ENCODE measurements at regions of chr6 and their contacts with region 1.

Region 1: DNA sequence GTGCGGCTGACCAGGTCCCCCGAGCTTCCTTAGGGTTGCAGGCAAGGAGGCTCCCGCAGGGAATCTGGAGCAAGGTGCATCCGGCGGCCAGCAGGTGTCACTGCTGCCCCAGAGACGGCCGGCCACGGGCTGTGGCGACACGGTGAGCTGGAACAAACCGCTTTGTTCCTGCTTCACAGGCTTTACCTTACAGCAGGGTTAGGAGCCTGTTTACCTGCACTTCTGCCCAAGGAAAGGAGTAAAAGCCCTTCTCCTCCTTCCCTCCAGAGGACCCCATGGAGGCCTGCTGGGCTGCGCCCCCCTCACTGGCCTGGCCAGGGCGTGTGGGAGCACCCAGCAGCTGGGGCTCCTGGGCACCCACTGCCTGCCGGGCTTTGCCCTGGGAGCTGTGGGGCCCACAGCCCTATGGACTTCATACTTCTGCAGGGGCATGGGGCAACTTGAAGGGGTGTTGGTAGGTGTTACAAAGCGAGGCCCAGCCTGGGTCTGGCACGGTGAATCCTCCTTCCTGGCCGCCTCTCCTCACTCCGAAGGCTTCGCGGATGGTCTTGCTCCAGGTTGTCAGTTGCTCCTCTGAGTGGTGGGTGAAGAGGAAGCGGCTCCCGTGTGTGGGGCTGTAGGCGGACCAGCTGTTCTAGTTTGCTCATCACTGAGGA is 88.4 kb downstream of the CDC5L start:
- DNase-seq: peak; percentile 54 to 75 (median 74)
- H3K4me3 ChIP-seq: peak overlapping the region in 2 of 7 experiments; percentile 7 to 41
- H3K27ac ChIP-seq: no peak overlapping the region
- H3K4me1 ChIP-seq: peaks cover 0 to 27% (median 20%) of the 10 kb centered on the region in 4 experiments
- H3K27me3 ChIP-seq: no peaks in the 10 kb centered on the region

Region 2: DNA sequence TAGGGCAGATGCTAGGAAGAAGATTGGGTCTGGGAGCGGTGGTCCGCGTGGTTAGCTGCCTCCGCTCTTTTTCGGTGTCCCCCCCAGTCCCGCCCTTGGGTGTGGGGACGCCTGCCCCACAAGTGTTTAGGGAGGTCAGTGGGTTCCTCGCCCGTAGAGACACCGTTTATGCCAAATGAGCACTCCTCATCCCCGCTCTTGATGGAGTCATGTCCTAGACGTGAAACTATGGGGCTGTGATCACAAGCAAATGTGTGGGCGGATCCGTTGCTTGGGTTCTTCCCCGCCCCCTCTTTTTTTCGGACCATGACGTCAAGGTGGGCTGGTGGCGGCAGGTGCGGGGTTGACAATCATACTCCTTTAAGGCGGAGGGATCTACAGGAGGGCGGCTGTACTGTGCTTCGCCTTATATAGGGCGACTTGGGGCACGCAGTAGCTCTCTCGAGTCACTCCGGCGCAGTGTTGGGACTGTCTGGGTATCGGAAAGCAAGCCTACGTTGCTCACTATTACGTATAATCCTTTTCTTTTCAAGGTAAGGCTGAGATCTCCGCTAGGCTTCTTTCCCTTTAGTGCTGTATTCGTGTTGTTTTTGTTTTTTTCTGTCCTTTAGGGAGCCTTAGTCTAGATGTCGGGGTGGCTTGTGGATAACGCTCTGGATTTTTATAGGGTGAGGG is 229.1 kb before region 1 on chr6 and contains the start of gene HSP90AB1:
- CTCF ChIA-PET with region 1: no interaction called
- POLR2A ChIA-PET with region 1: no interaction called
- DNase-seq: peak; percentile 98 to 99 (median 99)
- H3K4me3 ChIP-seq: peak within 1 kb of the TSS; percentile 67 to 100 (median 97)
- H3K27ac ChIP-seq: peak within 1 kb of the TSS; percentile 88 to 96
- H3K4me1 ChIP-seq: peaks cover 13 to 39% (median 31%) of the 10 kb centered on the region in 4 experiments
- H3K27me3 ChIP-seq: no peaks in the 10 kb centered on the region

Region 3: DNA sequence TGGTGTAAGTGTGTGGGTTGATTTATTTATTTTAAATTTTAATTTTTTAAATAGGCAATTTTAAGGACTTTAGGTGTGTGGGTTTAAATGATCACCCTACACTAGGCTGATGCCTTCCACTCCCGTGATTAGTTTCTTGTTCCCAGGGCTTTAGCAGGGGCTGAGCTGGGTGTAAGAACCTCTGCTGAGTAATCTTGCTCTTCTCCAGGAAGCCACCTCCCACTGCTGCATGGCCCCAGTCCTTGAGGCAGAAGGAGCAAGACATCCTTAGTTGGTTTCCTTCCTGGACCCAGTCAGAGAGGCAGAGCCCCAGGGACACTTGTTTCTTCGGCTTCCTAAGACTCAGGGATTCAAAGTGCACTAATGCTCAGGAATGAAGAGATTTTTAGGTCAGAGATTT is 108.2 kb before region 1 on chr6:
- CTCF ChIA-PET with region 1: no interaction called
- POLR2A ChIA-PET with region 1: no interaction called
- DNase-seq: peak in 2 of 3 donors; percentile 35 to 41
- H3K4me3 ChIP-seq: no peak overlapping the region
- H3K27ac ChIP-seq: no peak overlapping the region
- H3K4me1 ChIP-seq: peaks cover 0 to 6% (median 3%) of the 10 kb centered on the region in 4 experiments
- H3K27me3 ChIP-seq: no peaks in the 10 kb centered on the region

Region 4: GRCh38 chr6:44456070-44456965 is 19.6 kb before region 1 on chr6:
- CTCF ChIA-PET with region 1: interaction called, 135 read pairs
- POLR2A ChIA-PET with region 1: no interaction called
- DNase-seq: peak; percentile 49 to 65 (median 64)
- H3K4me3 ChIP-seq: no peak overlapping the region
- H3K27ac ChIP-seq: no peak overlapping the region
- H3K4me1 ChIP-seq: peaks cover 0 to 1% (median 0%) of the 10 kb centered on the region in 4 experiments
- H3K27me3 ChIP-seq: no peaks in the 10 kb centered on the region

Region 5: GRCh38 chr6:44580901-44581300 is 105.0 kb after region 1 on chr6:
- CTCF ChIA-PET with region 1: no interaction called
- POLR2A ChIA-PET with region 1: no interaction called
- DNase-seq: no peak
- H3K4me3 ChIP-seq: no peak overlapping the region
- H3K27ac ChIP-seq: no peak overlapping the region
- H3K4me1 ChIP-seq: no peaks in the 10 kb centered on the region
- H3K27me3 ChIP-seq: no peaks in the 10 kb centered on the region

Region 6: DNA sequence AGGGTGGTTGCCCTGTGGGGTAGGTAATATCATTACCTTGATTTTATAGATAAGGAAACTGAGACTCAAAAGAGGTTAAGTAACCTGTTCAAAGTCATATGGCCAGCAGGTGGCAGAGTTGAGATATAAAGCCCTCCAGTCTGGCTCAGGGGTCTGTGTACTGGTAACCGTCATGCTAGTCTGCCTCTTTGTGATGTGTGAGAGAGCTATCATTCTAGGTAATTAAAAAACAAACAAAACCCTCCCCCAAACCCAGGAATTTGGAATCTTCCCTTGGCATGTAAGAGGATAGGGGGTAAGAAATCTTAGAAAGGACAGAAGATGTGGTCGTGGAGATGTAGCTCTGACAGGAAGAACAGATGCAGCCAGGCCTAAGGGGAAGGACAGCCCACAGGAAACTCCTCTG is 117.6 kb after region 1 on chr6:
- CTCF ChIA-PET with region 1: interaction called, 24 read pairs
- POLR2A ChIA-PET with region 1: no interaction called
- DNase-seq: peak; percentile 72 to 86 (median 83)
- H3K4me3 ChIP-seq: no peak overlapping the region
- H3K27ac ChIP-seq: no peak overlapping the region
- H3K4me1 ChIP-seq: peaks cover 0 to 15% (median 6%) of the 10 kb centered on the region in 4 experiments
- H3K27me3 ChIP-seq: no peaks in the 10 kb centered on the region

Region 7: GRCh38 chr6:44642870-44643529 is 167.1 kb after region 1 on chr6:
- CTCF ChIA-PET with region 1: interaction called, 24 read pairs
- POLR2A ChIA-PET with region 1: no interaction called
- DNase-seq: no peak
- H3K4me3 ChIP-seq: no peak overlapping the region
- H3K27ac ChIP-seq: no peak overlapping the region
- H3K4me1 ChIP-seq: peaks cover 0 to 7% (median 4%) of the 10 kb centered on the region in 4 experiments
- H3K27me3 ChIP-seq: no peaks in the 10 kb centered on the region

Region 8: DNA sequence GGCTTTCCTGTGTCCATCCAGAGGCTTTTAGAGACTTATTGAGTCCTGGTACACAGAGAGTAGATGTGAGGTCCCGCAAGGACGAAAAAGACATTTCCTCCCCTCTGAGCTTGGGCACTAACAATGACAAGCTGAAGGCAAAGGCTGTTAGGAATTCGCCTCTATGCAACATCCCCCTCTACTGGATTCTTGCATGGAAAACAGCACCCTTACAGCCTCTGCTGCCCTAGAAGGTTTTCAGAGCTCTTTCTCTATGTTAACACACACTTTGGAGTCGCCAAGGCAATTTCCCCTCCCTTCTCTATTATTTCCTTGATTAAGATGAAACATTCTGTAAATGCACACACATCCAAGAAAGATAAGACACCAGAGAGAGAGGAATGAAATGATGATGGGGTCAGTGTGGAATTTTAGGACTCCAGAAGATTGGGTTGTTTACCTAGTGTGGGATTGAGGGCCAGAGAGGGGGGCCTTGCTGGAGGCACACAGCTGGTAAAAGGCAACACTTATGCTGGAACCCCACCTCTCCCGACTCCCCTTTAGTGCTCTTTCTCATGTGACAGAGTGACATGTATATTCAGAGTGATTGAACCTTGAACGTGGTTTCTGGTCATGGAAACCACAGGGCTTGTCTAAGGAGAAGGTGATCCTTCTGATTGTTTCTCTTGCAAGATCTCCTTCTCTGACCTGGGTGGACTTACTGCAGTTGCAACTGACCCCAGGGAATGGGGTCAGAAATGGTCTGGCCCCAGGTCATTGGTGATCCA is 1239.0 kb after region 1 on chr6:
- CTCF ChIA-PET with region 1: interaction called, 10 read pairs
- POLR2A ChIA-PET with region 1: no interaction called
- DNase-seq: peak; percentile 81 to 86 (median 84)
- H3K4me3 ChIP-seq: no peak overlapping the region
- H3K27ac ChIP-seq: no peak overlapping the region
- H3K4me1 ChIP-seq: peaks cover 0 to 50% (median 20%) of the 10 kb centered on the region in 4 experiments
- H3K27me3 ChIP-seq: no peaks in the 10 kb centered on the region